ENCODE measurements at regions of chr22 and their contacts with region 1.

Region 1: DNA sequence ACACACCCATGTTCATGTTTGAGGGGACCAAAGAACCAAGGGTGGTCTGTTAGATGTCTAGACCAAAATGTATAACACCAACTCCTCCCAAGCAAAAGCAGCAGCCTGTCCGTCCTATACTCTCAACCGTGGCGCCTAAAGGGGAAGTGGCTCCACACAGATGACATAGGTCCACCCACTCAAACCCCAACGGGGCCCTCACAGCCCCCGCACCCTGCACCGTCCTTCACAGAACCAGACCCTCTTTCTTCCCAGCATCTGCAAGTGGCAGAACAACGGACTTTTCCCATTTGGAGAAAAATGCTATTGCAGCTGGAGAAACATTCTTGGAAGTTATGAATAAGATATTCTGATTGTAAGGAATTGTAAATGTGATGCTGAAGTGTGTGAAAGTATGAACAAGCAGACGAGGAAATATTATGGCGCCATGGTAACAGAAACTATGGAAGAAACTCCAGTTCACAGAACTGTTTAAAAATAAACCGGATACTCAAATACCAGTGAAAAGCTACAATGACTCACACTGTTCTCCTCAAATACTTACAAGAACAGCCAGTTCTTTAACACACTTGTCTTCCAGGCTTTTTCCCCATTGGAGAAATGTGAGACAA is 76.5 kb upstream of the ARFGAP3 start:
- DNase-seq: peak; percentile 77 to 94 (median 89)
- H3K4me3 ChIP-seq: peak overlapping the region in 1 of 3 experiments; percentile 57
- H3K4me3 Mint-ChIP-seq: peak overlapping the region; percentile 61 to 82
- H3K27ac ChIP-seq: peak overlapping the region; percentile 93 to 99
- H3K27ac Mint-ChIP-seq: peak overlapping the region; percentile 100
- H3K4me1 ChIP-seq: peaks cover 97 to 99% of the 10 kb centered on the region in 2 donors
- H3K4me1 Mint-ChIP-seq: peaks cover 98% of the 10 kb centered on the region
- H3K27me3 ChIP-seq: no peaks in the 10 kb centered on the region
- H3K27me3 Mint-ChIP-seq: peaks cover 0 to 2% (median 1%) of the 10 kb centered on the region in 3 donors
- CTCF ChIP-seq: no peak

Region 2: DNA sequence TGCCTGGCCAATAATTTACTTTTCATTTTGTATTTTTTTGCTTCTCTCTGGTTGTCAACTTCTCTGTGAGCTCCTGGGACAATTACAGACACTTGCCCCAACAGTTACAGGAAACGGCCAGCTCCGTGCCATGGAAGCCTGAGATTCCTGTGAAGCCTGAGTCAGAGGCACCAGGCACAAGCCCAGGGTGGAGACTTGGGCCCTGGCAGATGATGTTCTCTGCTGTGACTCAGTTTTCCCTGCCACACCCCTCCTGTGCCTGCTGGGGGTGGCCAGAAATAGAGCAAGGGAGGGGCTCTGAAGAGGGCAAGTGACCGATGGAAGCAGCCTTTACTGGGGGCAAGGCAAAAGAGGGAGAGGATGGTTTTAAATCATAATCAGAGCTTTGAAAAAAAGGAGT is 298.1 kb before region 1 on chr22:
- intact Hi-C with region 1: no loop called
- DNase-seq: no peak
- H3K4me3 ChIP-seq: no peak overlapping the region
- H3K4me3 Mint-ChIP-seq: no peak overlapping the region
- H3K27ac ChIP-seq: no peak overlapping the region
- H3K27ac Mint-ChIP-seq: peak overlapping the region in 3 of 7 donors; percentile 37 to 58 (median 51)
- H3K4me1 ChIP-seq: no peaks in the 10 kb centered on the region
- H3K4me1 Mint-ChIP-seq: peaks cover 1% of the 10 kb centered on the region
- H3K27me3 ChIP-seq: no peaks in the 10 kb centered on the region
- H3K27me3 Mint-ChIP-seq: peaks cover 0 to 3% (median 0%) of the 10 kb centered on the region in 3 donors
- CTCF ChIP-seq: no peak

Region 3: DNA sequence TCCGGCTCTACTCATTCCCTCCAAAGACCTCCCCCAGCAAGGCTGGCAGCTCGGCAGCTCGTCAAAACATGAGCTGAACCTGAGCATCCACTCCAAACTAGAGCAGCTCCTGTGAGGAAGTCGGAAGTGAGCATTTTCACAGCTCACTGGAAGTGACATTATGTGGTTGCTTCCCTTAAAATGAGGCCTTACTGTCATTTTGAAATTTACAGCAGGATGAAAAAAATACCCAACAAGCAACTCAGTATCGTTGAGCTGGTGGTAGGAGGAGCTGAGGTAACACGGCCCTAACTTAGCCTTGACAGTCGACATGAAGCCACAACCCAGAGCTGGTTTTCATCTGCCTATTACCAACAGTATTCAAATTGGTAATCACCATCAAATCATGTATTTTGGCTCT is 38.5 kb before region 1 on chr22:
- intact Hi-C with region 1: loop called in 1 of 2 experiments (anchors 5 kb)
- DNase-seq: peak; percentile 76 to 79 (median 78)
- H3K4me3 ChIP-seq: peak overlapping the region in 1 of 3 experiments; percentile 56
- H3K4me3 Mint-ChIP-seq: peak overlapping the region in 1 of 2 donors; percentile 79
- H3K27ac ChIP-seq: peak overlapping the region; percentile 94
- H3K27ac Mint-ChIP-seq: peak overlapping the region; percentile 96 to 99 (median 98)
- H3K4me1 ChIP-seq: peaks cover 77 to 80% of the 10 kb centered on the region in 2 donors
- H3K4me1 Mint-ChIP-seq: peaks cover 79% of the 10 kb centered on the region
- H3K27me3 ChIP-seq: no peaks in the 10 kb centered on the region
- H3K27me3 Mint-ChIP-seq: peaks cover 0 to 2% (median 0%) of the 10 kb centered on the region in 3 donors
- CTCF ChIP-seq: no peak

Region 4: GRCh38 chr22:42994881-42995562 is 61.4 kb after region 1 on chr22:
- intact Hi-C with region 1: loop called in 1 of 2 experiments (anchors 5 kb)
- DNase-seq: peak; percentile 86 to 94 (median 92)
- H3K4me3 ChIP-seq: peak overlapping the region; percentile 20 to 66 (median 23)
- H3K4me3 Mint-ChIP-seq: peak overlapping the region; percentile 76 to 94
- H3K27ac ChIP-seq: peak overlapping the region; percentile 83 to 93
- H3K27ac Mint-ChIP-seq: peak overlapping the region; percentile 96 to 99 (median 99)
- H3K4me1 ChIP-seq: peaks cover 88 to 93% of the 10 kb centered on the region in 2 donors
- H3K4me1 Mint-ChIP-seq: peaks cover 92% of the 10 kb centered on the region
- H3K27me3 ChIP-seq: no peaks in the 10 kb centered on the region
- H3K27me3 Mint-ChIP-seq: peaks cover 0 to 2% (median 0%) of the 10 kb centered on the region in 3 donors
- CTCF ChIP-seq: no peak